ENCODE measurements at regions of chr16 and their contacts with region 1.

Region 1: DNA sequence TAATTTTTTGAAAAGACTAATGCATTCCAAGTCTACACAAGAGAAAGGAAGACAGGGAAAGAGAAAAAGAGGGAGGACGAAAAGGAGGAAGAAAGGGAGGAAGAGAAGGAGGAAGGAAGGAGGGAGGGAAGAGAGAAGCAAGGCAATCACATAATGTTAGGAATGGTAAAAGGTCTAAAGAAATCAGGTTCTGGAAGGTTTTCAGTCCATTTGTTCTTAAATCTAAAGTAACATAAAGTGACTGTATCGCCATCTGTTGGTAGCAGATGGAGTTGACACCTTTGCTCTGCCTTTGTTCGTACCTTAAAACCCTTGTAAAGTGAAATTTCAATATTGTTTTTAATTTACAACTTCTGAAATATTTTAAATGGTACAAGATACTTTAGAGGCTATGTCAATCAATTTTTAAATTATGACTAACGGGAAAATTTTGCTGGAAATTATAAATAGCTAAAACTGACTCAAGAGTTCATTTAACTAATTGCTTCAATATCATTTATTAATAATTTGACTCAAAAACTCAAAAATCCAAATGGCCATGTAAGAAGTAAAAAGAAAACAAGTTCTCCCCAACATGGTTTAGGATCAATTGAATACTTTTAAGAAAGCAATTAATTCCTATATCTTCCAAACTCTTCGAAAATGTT is 20.4 kb upstream of the CDYL2 start:
- DNase-seq: peak; percentile 30
- H3K4me3 Mint-ChIP-seq: no peak overlapping the region
- H3K27ac Mint-ChIP-seq: no peak overlapping the region
- H3K4me1 Mint-ChIP-seq: no peaks in the 10 kb centered on the region
- H3K27me3 Mint-ChIP-seq: peaks cover 15% of the 10 kb centered on the region
- CTCF ChIP-seq: peak; percentile 83

Region 2: GRCh38 chr16:80656711-80657150 is 168.1 kb before region 1 on chr16:
- CTCF ChIA-PET with region 1: no interaction called
- intact Hi-C with region 1: loop called (anchors 10 kb)
- DNase-seq: no peak
- H3K4me3 Mint-ChIP-seq: no peak overlapping the region
- H3K27ac Mint-ChIP-seq: no peak overlapping the region
- H3K4me1 Mint-ChIP-seq: no peaks in the 10 kb centered on the region
- H3K27me3 Mint-ChIP-seq: no peaks in the 10 kb centered on the region
- CTCF ChIP-seq: no peak

Region 3: GRCh38 chr16:80739523-80739922 is 85.3 kb before region 1 on chr16:
- CTCF ChIA-PET with region 1: no interaction called
- intact Hi-C with region 1: no loop called
- DNase-seq: no peak
- H3K4me3 Mint-ChIP-seq: no peak overlapping the region
- H3K27ac Mint-ChIP-seq: no peak overlapping the region
- H3K4me1 Mint-ChIP-seq: no peaks in the 10 kb centered on the region
- H3K27me3 Mint-ChIP-seq: peaks cover 10% of the 10 kb centered on the region
- CTCF ChIP-seq: no peak